ENCODE measurements at regions of chr12 and their contacts with region 1.

Region 1: DNA sequence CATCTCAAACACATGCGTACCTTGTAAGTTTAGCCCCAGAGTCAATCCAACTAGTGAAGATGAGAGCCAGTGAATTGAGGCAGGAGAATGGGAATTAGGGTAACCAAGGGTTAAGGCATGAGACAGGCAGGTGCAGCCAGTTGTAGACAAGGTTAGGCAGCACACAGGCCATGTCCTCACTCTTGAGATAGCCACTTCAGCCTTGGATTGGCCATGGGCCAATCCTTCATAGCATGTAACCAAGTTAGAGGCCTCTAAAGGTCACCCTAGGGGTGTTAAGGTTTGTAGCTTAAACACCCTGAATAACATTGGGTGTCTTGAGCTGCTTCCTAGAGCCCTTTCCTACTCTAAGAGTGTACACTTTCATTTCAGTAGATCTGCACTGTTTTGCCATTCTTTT is 208.2 kb upstream of the RBM19 start:
- DNase-seq: peak in 2 of 5 donors; percentile 49 to 67
- ATAC-seq: peak; percentile 48 to 83 (median 72)
- H3K4me3 ChIP-seq: no peak overlapping the region
- H3K27ac ChIP-seq: no peak overlapping the region
- H3K4me1 ChIP-seq: peaks cover 0 to 17% (median 0%) of the 10 kb centered on the region in 12 donors
- H3K27me3 ChIP-seq: no peaks in the 10 kb centered on the region
- CTCF ChIP-seq: no peak
- POLR2A ChIP-seq: no peak

Region 2: GRCh38 chr12:114213055-114213581 is 38.8 kb after region 1 on chr12:
- intact Hi-C with region 1: loop called in 2 of 10 experiments (anchors 5 kb)
- DNase-seq: peak in 2 of 5 donors; percentile 25 to 45
- ATAC-seq: peak; percentile 80 to 92 (median 86)
- H3K4me3 ChIP-seq: no peak overlapping the region
- H3K27ac ChIP-seq: peak overlapping the region in 3 of 12 donors; percentile 14 to 50 (median 18)
- H3K4me1 ChIP-seq: peaks cover 0 to 17% (median 4%) of the 10 kb centered on the region in 12 donors
- H3K27me3 ChIP-seq: peaks cover 0 to 3% (median 0%) of the 10 kb centered on the region in 9 donors
- CTCF ChIP-seq: peak in 10 of 12 donors; percentile 9 to 42 (median 22)
- POLR2A ChIP-seq: no peak

Region 3: GRCh38 chr12:114339626-114340025 is 165.3 kb after region 1 on chr12:
- intact Hi-C with region 1: loop called in 1 of 10 experiments (anchors 10 kb)
- DNase-seq: no peak
- ATAC-seq: no peak
- H3K4me3 ChIP-seq: no peak overlapping the region
- H3K27ac ChIP-seq: no peak overlapping the region
- H3K4me1 ChIP-seq: peaks cover 0 to 4% (median 0%) of the 10 kb centered on the region in 12 donors
- H3K27me3 ChIP-seq: peaks cover 0 to 4% (median 0%) of the 10 kb centered on the region in 9 donors
- CTCF ChIP-seq: no peak
- POLR2A ChIP-seq: no peak

Region 4: DNA sequence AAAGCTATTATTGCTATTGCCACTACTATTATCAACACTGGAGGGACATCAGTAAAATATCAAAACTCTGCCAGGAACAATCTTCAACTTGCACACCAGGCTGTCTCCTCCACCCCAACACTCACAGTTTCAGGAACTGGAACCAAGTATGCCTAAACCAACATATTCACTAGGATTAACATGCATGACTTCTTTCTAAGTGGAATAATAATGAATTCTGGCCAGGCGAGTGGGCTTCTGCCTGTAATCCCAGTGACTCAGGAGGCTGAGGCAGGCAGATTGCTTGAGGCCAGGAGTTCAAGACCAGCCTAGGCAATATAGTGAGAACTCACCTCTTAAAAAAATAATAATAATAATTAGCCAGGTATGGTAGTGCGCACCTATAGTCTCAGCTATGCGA is 173.5 kb after region 1 on chr12:
- intact Hi-C with region 1: loop called in 2 of 10 experiments (anchors 5 to 10 kb)
- DNase-seq: no peak
- ATAC-seq: no peak
- H3K4me3 ChIP-seq: no peak overlapping the region
- H3K27ac ChIP-seq: no peak overlapping the region
- H3K4me1 ChIP-seq: no peaks in the 10 kb centered on the region
- H3K27me3 ChIP-seq: no peaks in the 10 kb centered on the region
- CTCF ChIP-seq: no peak
- POLR2A ChIP-seq: no peak

Measured in heart left ventricle (tissue), 16 donors.